CD8-positive, alpha-beta T cell (primary cell): ENCODE measurements at regions of chr3 and their contacts with region 1.

Region 1: GRCh38 chr3:102078854-102079253 is 229.5 kb downstream of the NFKBIZ start:
- DNase-seq: peak in 5 of 9 experiments; percentile 9 to 55 (median 15)
- ATAC-seq: peak; percentile 68
- H3K4me3 ChIP-seq: no peak overlapping the region
- H3K4me3 Mint-ChIP-seq: peak overlapping the region; percentile 41
- H3K27ac ChIP-seq: peak overlapping the region; percentile 36 to 69
- H3K27ac Mint-ChIP-seq: peak overlapping the region; percentile 97
- H3K4me1 ChIP-seq: peaks cover 33% of the 10 kb centered on the region
- H3K4me1 Mint-ChIP-seq: peaks cover 60% of the 10 kb centered on the region
- H3K27me3 ChIP-seq: no peaks in the 10 kb centered on the region
- H3K27me3 Mint-ChIP-seq: no peaks in the 10 kb centered on the region
- CTCF ChIP-seq: no peak

Region 2: DNA sequence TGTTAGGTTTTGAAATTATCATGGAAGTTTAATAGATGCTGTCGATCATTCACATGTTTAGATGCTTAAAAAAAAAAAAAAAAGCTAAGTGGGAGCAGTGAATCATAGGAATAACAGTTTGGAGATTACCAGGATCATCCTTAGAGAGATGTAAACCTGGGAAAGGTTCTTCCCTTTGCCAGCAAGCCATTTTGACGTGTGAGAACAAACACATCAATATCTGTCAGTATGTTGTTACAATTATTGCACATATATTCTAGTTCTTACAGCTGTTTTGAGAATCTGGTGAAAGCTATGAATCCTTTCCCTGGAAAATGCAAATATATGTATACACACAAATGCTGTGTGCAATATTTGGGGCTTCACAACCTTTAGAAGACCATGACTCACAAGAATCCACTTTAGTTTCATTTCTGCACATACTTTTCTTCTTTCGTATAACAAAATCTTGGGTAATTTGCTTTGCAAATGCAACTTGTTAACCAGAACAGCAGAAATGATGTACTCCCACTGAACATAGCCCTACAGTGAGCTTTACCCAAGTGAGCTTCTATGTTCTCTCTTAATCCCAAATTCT is 217.6 kb before region 1 on chr3:
- CTCF ChIA-PET with region 1: no interaction called
- POLR2A ChIA-PET with region 1: no interaction called
- intact Hi-C with region 1: no loop called
- DNase-seq: peak in 1 of 9 experiments; percentile 30
- ATAC-seq: peak; percentile 15
- H3K4me3 ChIP-seq: no peak overlapping the region
- H3K4me3 Mint-ChIP-seq: no peak overlapping the region
- H3K27ac ChIP-seq: no peak overlapping the region
- H3K27ac Mint-ChIP-seq: peak overlapping the region; percentile 14
- H3K4me1 ChIP-seq: peaks cover 6% of the 10 kb centered on the region
- H3K4me1 Mint-ChIP-seq: peaks cover 26% of the 10 kb centered on the region
- H3K27me3 ChIP-seq: no peaks in the 10 kb centered on the region
- H3K27me3 Mint-ChIP-seq: no peaks in the 10 kb centered on the region
- CTCF ChIP-seq: no peak

Region 3: GRCh38 chr3:101936419-101937356 is 142.2 kb before region 1 on chr3:
- CTCF ChIA-PET with region 1: no interaction called
- POLR2A ChIA-PET with region 1: no interaction called
- intact Hi-C with region 1: loop called in 1 of 2 experiments (anchors 10 kb)
- DNase-seq: peak in 5 of 9 experiments; percentile 8 to 82 (median 31)
- ATAC-seq: peak; percentile 93
- H3K4me3 ChIP-seq: peak overlapping the region in 1 of 2 experiments; percentile 9
- H3K4me3 Mint-ChIP-seq: peak overlapping the region; percentile 45
- H3K27ac ChIP-seq: no peak overlapping the region
- H3K27ac Mint-ChIP-seq: peak overlapping the region; percentile 87
- H3K4me1 ChIP-seq: peaks cover 66% of the 10 kb centered on the region
- H3K4me1 Mint-ChIP-seq: peaks cover 22% of the 10 kb centered on the region
- H3K27me3 ChIP-seq: no peaks in the 10 kb centered on the region
- H3K27me3 Mint-ChIP-seq: no peaks in the 10 kb centered on the region
- CTCF ChIP-seq: no peak

Region 4: GRCh38 chr3:101988591-101988990 is 90.3 kb before region 1 on chr3:
- CTCF ChIA-PET with region 1: no interaction called
- POLR2A ChIA-PET with region 1: no interaction called
- intact Hi-C with region 1: no loop called
- DNase-seq: peak in 1 of 9 experiments; percentile 6
- ATAC-seq: no peak
- H3K4me3 ChIP-seq: no peak overlapping the region
- H3K4me3 Mint-ChIP-seq: no peak overlapping the region
- H3K27ac ChIP-seq: no peak overlapping the region
- H3K27ac Mint-ChIP-seq: no peak overlapping the region
- H3K4me1 ChIP-seq: peaks cover 4% of the 10 kb centered on the region
- H3K4me1 Mint-ChIP-seq: peaks cover 8% of the 10 kb centered on the region
- H3K27me3 ChIP-seq: no peaks in the 10 kb centered on the region
- H3K27me3 Mint-ChIP-seq: no peaks in the 10 kb centered on the region
- CTCF ChIP-seq: no peak

Region 5: GRCh38 chr3:102089904-102090492 is 11.1 kb after region 1 on chr3:
- CTCF ChIA-PET with region 1: interaction called, 12 read pairs
- POLR2A ChIA-PET with region 1: interaction called, 7 read pairs
- intact Hi-C with region 1: no loop called
- DNase-seq: no peak
- ATAC-seq: no peak
- H3K4me3 ChIP-seq: no peak overlapping the region
- H3K4me3 Mint-ChIP-seq: no peak overlapping the region
- H3K27ac ChIP-seq: no peak overlapping the region
- H3K27ac Mint-ChIP-seq: no peak overlapping the region
- H3K4me1 ChIP-seq: peaks cover 14% of the 10 kb centered on the region
- H3K4me1 Mint-ChIP-seq: peaks cover 19% of the 10 kb centered on the region
- H3K27me3 ChIP-seq: no peaks in the 10 kb centered on the region
- H3K27me3 Mint-ChIP-seq: no peaks in the 10 kb centered on the region
- CTCF ChIP-seq: no peak

Region 6: DNA sequence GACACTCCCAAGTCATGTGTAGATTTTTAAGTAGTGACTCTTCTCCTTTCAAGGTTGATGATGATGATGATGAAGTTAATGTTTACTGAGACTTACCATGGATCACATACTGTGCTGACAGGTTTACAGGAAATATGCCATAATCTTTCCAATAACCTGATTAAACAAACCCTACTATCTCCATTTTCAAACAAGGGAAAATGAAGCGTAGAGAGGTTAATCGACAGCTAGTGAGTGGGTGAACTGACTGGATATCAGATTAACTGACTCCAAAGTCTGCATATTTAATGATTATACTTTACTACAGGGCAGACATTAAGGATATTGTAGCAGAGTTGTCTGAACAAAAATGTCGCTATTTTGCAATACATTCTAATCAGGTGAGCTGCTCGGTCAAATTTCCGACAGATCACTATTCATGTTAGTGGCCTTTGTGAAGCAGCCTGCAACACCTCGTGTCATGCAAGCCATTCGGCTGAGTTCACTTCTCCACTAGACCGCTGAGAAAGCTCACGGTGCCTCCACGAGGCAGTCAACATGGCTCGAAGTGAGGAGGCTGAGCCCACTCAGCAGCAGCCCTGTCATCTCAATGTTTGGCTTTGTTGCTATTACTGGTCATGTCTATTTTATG is 34.7 kb after region 1 on chr3:
- CTCF ChIA-PET with region 1: no interaction called
- POLR2A ChIA-PET with region 1: interaction called, 4 read pairs
- intact Hi-C with region 1: loop called in 1 of 2 experiments (anchors 2 kb)
- DNase-seq: peak in 1 of 9 experiments; percentile 7
- ATAC-seq: no peak
- H3K4me3 ChIP-seq: no peak overlapping the region
- H3K4me3 Mint-ChIP-seq: no peak overlapping the region
- H3K27ac ChIP-seq: peak overlapping the region; percentile 28 to 34
- H3K27ac Mint-ChIP-seq: peak overlapping the region; percentile 94
- H3K4me1 ChIP-seq: peaks cover 25% of the 10 kb centered on the region
- H3K4me1 Mint-ChIP-seq: peaks cover 31% of the 10 kb centered on the region
- H3K27me3 ChIP-seq: no peaks in the 10 kb centered on the region
- H3K27me3 Mint-ChIP-seq: no peaks in the 10 kb centered on the region
- CTCF ChIP-seq: no peak